Activated CD4-positive, alpha-beta memory T cell treated with anti-CD3 and anti-CD28 coated beads, Interleukin-2, amount 10 ng/mL, durations not matched to agents 7 days and 5 days (primary cell): ENCODE measurements at regions of chr17 and their contacts with region 1.

Region 1: GRCh38 chr17:60641810-60642220 is 35.8 kb upstream of the BCAS3 start:
- DNase-seq: peak; percentile 47
- H3K4me3 Mint-ChIP-seq: no peak overlapping the region
- H3K27ac Mint-ChIP-seq: no peak overlapping the region
- H3K4me1 Mint-ChIP-seq: peaks cover 9% of the 10 kb centered on the region
- H3K27me3 Mint-ChIP-seq: no peaks in the 10 kb centered on the region

Region 2: DNA sequence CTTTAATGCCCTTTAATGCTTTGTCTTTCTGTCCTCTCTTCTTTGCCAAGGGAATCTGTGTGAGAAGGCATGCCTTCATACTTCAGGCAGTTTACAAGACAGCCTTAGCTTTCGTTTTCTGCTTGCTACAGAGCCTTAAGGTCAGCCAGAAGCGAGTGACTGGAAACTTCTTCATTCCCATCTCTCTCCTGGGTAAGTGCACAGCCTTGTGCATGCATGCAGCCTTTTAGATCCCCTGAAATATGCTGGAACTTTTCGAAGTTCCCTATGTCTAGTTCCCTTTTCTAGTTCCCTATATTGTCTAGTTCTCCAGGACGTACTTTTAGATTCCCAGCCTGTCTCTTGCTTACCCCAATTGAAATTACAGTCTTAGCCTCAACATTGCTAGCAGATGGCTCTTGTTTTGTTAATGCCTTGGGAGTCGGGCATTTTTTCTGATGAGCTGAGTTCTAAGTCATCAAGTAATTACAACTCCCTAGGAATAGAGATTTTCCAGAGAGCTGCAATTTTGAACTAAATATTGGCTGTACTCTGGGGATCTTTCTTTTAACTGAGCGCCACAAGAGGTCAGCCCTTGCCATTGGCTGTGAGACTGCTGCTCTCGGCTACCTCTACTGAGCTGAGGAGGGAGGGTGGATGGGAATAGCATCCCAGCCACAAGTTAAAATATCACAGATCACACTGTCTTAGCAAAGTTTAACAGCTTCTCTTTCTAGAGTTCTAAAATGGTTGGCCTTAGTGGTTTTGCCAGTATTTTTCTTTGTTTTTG is 64.5 kb before region 1 on chr17:
- CTCF ChIA-PET with region 1: interaction called, 14 read pairs
- POLR2A ChIA-PET with region 1: no interaction called
- DNase-seq: no peak
- H3K4me3 Mint-ChIP-seq: peak overlapping the region; percentile 58
- H3K27ac Mint-ChIP-seq: no peak overlapping the region
- H3K4me1 Mint-ChIP-seq: peaks cover 7% of the 10 kb centered on the region
- H3K27me3 Mint-ChIP-seq: peaks cover 3% of the 10 kb centered on the region

Region 3: GRCh38 chr17:60630352-60630751 is 11.5 kb before region 1 on chr17:
- CTCF ChIA-PET with region 1: interaction called, 19 read pairs
- POLR2A ChIA-PET with region 1: interaction called, 3 read pairs
- DNase-seq: no peak
- H3K4me3 Mint-ChIP-seq: no peak overlapping the region
- H3K27ac Mint-ChIP-seq: no peak overlapping the region
- H3K4me1 Mint-ChIP-seq: peaks cover 8% of the 10 kb centered on the region
- H3K27me3 Mint-ChIP-seq: no peaks in the 10 kb centered on the region

Region 4: GRCh38 chr17:60664022-60664421 is 22.2 kb after region 1 on chr17:
- CTCF ChIA-PET with region 1: interaction called, 10 read pairs
- POLR2A ChIA-PET with region 1: no interaction called
- DNase-seq: no peak
- H3K4me3 Mint-ChIP-seq: no peak overlapping the region
- H3K27ac Mint-ChIP-seq: no peak overlapping the region
- H3K4me1 Mint-ChIP-seq: peaks cover 6% of the 10 kb centered on the region
- H3K27me3 Mint-ChIP-seq: no peaks in the 10 kb centered on the region